ENCODE measurements at regions of chr12 and their contacts with region 1.

Region 1: GRCh38 chr12:89709157-89709994 is 738 bp upstream of the ATP2B1 start:
- DNase-seq: peak; percentile 99
- H3K4me3 ChIP-seq: peak overlapping the region; percentile 82
- H3K27ac ChIP-seq: peak overlapping the region; percentile 96
- H3K27me3 ChIP-seq: no peaks in the 10 kb centered on the region
- CTCF ChIP-seq: no peak

Region 2: DNA sequence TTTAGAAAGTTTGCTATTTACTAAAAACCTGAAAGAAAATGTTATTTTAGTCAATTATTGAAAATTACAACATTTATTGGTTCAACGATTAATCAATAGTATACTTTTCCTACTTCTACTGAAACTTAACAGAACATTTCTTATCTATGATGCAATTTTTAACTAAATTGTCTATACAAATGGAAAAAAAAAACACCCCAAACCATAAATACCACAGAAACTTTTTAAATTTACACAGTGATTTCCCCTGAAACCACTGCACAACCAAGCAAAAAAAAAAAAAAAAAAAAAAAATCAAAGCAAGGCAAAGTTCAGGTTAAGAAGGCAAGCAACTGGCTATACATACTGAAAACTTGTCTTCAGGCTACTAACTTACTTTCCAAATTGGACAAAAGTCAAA is 111.6 kb before region 1 on chr12:
- CTCF ChIA-PET with region 1: no interaction called
- POLR2A ChIA-PET with region 1: no interaction called
- DNase-seq: no peak
- H3K4me3 ChIP-seq: no peak overlapping the region
- H3K27ac ChIP-seq: no peak overlapping the region
- H3K27me3 ChIP-seq: no peaks in the 10 kb centered on the region
- CTCF ChIP-seq: no peak

Region 3: GRCh38 chr12:89678225-89678624 is 31.2 kb before region 1 on chr12:
- CTCF ChIA-PET with region 1: no interaction called
- POLR2A ChIA-PET with region 1: no interaction called
- DNase-seq: no peak
- H3K4me3 ChIP-seq: no peak overlapping the region
- H3K27ac ChIP-seq: no peak overlapping the region
- H3K27me3 ChIP-seq: no peaks in the 10 kb centered on the region
- CTCF ChIP-seq: no peak

Region 4: GRCh38 chr12:89756585-89757321 is 47.4 kb after region 1 on chr12:
- CTCF ChIA-PET with region 1: no interaction called
- POLR2A ChIA-PET with region 1: interaction called, 11 read pairs
- DNase-seq: peak; percentile 92
- H3K4me3 ChIP-seq: no peak overlapping the region
- H3K27ac ChIP-seq: peak overlapping the region; percentile 87
- H3K27me3 ChIP-seq: no peaks in the 10 kb centered on the region
- CTCF ChIP-seq: no peak

Region 5: GRCh38 chr12:89783357-89784060 is 74.1 kb after region 1 on chr12:
- CTCF ChIA-PET with region 1: interaction called, 3 read pairs
- POLR2A ChIA-PET with region 1: interaction called, 14 read pairs
- DNase-seq: no peak
- H3K4me3 ChIP-seq: no peak overlapping the region
- H3K27ac ChIP-seq: peak overlapping the region; percentile 53
- H3K27me3 ChIP-seq: no peaks in the 10 kb centered on the region
- CTCF ChIP-seq: no peak

Measured in AG04450 (cell line).